ENCODE measurements at regions of chr14 and their contacts with region 1.

Region 1: DNA sequence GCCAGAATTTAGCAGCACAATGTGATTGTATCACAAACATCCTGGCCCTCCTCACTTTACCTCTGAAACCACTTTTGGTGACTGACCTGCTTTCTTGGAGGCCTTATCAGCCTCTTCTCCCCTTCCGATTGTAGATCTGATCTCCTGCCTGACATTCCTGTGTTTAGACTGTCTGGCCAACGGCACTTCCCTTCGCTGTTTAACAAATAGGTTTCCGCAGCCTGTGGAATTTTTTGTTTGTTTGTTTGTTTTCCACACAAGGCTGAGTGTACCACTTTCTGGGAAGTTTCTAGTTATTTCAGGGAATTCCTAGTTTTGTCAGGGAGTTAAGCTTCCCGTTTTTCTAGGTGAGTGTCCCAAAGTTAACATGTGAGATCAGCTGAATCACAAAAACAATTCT is 65.9 kb upstream of the CDKN3 start:
- DNase-seq: no peak
- H3K4me3 Mint-ChIP-seq: no peak overlapping the region
- H3K27ac Mint-ChIP-seq: no peak overlapping the region
- H3K4me1 Mint-ChIP-seq: no peaks in the 10 kb centered on the region
- H3K27me3 Mint-ChIP-seq: peaks cover 5% of the 10 kb centered on the region

Region 2: DNA sequence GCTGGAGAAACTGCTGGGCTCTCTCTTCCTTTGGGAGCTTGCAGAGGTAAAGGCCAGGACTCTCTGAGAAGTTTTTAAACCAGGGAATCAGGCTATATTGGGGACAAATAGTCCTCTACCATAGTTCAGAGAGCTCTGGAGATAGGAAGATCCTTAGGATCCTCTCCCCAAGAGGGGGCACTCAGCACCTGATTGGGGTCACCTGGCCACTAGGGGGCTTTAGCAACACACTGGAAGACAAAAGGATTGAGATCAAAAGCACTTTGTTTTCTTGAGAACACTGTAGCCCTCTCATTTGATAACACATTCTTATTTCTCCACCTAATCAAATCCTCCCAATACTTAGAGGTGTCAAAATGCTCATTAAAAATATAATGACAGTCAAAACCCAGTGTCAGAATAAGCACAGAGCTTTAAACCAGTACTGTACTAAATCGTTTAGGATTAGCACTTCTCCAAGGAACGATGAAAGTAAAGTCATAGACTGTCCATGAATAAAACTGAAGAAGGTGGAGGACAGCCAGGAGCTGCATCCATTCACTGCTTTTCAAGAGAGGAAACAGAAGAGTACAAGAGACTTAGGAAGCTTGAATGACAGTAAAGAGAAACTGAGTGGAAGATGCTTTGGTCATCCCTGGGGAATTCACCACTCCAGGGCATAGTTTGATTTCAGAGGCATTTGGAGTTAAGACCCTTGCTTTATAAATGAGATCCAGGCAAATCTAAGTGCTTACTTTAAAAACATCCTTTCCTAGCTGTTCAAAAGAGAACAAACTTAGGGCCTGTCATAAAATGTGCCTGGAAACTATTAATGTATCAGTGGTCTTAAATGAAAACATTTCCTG is 400.8 kb before region 1 on chr14:
- CTCF ChIA-PET with region 1: interaction called, 4 read pairs
- POLR2A ChIA-PET with region 1: no interaction called
- intact Hi-C with region 1: loop called (anchors 5 kb)
- DNase-seq: peak; percentile 48
- H3K4me3 Mint-ChIP-seq: no peak overlapping the region
- H3K27ac Mint-ChIP-seq: no peak overlapping the region
- H3K4me1 Mint-ChIP-seq: no peaks in the 10 kb centered on the region
- H3K27me3 Mint-ChIP-seq: peaks cover 2% of the 10 kb centered on the region

Region 3: GRCh38 chr14:54881235-54881760 is 550.4 kb after region 1 on chr14:
- CTCF ChIA-PET with region 1: no interaction called
- POLR2A ChIA-PET with region 1: no interaction called
- intact Hi-C with region 1: no loop called
- DNase-seq: peak; percentile 34
- H3K4me3 Mint-ChIP-seq: peak overlapping the region; percentile 82
- H3K27ac Mint-ChIP-seq: peak overlapping the region; percentile 94
- H3K4me1 Mint-ChIP-seq: peaks cover 46% of the 10 kb centered on the region
- H3K27me3 Mint-ChIP-seq: no peaks in the 10 kb centered on the region

Measured in activated CD4-positive, alpha-beta memory T cell treated with anti-CD3 and anti-CD28 coated beads for 36 hours (primary cell).